Thyroid gland (tissue), 4 donors: ENCODE measurements at regions of chr1 and their contacts with region 1.

Region 1: GRCh38 chr1:78607334-78607927 is 12.8 kb upstream of the IFI44L start:
- DNase-seq: no peak
- H3K4me3 ChIP-seq: no peak overlapping the region
- H3K27ac ChIP-seq: no peak overlapping the region
- H3K4me1 ChIP-seq: peaks cover 0 to 3% of the 10 kb centered on the region in 2 donors
- H3K27me3 ChIP-seq: no peaks in the 10 kb centered on the region
- CTCF ChIP-seq: peak in 5 of 6 experiments; percentile 30 to 75 (median 66)
- POLR2A ChIP-seq: no peak

Region 2: GRCh38 chr1:78132174-78132947 is 475.1 kb before region 1 on chr1:
- intact Hi-C with region 1: loop called (anchors 5 kb)
- DNase-seq: no peak
- H3K4me3 ChIP-seq: no peak overlapping the region
- H3K27ac ChIP-seq: no peak overlapping the region
- H3K4me1 ChIP-seq: no peaks in the 10 kb centered on the region
- H3K27me3 ChIP-seq: no peaks in the 10 kb centered on the region
- CTCF ChIP-seq: no peak
- POLR2A ChIP-seq: no peak

Region 3: GRCh38 chr1:78143152-78143551 is 464.3 kb before region 1 on chr1:
- intact Hi-C with region 1: loop called (anchors 5 kb)
- DNase-seq: no peak
- H3K4me3 ChIP-seq: no peak overlapping the region
- H3K27ac ChIP-seq: no peak overlapping the region
- H3K4me1 ChIP-seq: no peaks in the 10 kb centered on the region
- H3K27me3 ChIP-seq: no peaks in the 10 kb centered on the region
- CTCF ChIP-seq: no peak
- POLR2A ChIP-seq: no peak

Region 4: DNA sequence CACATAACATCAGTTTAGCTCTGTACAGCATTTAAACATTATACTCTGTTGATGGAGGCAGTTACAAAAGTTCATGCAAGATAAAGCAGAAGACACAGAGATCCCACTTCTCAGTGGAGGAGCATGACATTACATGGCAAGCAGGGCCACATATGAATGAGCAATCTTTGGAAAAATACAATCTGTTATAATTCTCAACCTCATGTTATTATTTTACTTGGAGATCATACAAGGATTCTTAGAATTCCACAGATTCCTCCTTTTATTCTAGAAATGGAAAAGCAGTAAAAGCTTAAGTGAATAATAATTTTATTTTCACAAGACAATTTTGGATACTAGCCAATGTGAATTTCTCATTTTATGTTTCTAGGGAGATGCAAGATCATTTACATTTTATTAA is 108.8 kb after region 1 on chr1:
- intact Hi-C with region 1: no loop called
- DNase-seq: no peak
- H3K4me3 ChIP-seq: no peak overlapping the region
- H3K27ac ChIP-seq: no peak overlapping the region
- H3K4me1 ChIP-seq: no peaks in the 10 kb centered on the region
- H3K27me3 ChIP-seq: no peaks in the 10 kb centered on the region
- CTCF ChIP-seq: no peak
- POLR2A ChIP-seq: no peak